ENCODE measurements at regions of chr1 and their contacts with region 1.

Region 1: DNA sequence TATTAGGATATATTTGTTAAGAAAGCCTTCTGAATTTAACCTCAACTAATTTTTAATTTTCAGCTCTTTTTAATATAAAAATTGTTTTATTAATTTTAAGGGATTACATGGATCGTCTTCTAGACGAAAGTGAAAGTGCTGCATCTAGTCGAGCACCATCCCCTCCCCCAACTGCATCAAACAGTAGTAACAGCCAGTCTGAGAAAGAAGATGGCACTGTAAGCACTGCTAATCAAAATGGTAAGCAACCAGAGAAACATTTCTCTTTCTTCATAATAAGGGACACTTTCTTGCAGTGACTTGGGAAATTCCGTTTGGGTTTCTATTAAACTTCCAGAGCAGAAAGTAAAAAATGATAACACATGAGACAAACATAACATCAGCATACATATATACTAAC is 56.9 kb downstream of the MIER1 start:
- DNase-seq: peak in 1 of 2 donors; percentile 48
- ATAC-seq: peak in 5 of 8 donors; percentile 70 to 85 (median 77)
- H3K4me3 ChIP-seq: peak overlapping the region in 6 of 10 donors; percentile 38 to 48 (median 46)
- H3K27ac ChIP-seq: peak overlapping the region in 5 of 10 donors; percentile 40 to 80 (median 49)
- H3K4me1 ChIP-seq: peaks cover 0 to 24% (median 11%) of the 10 kb centered on the region in 9 donors
- H3K27me3 ChIP-seq: no peaks in the 10 kb centered on the region
- CTCF ChIP-seq: peak in 2 of 9 donors; percentile 5 to 14

Region 2: DNA sequence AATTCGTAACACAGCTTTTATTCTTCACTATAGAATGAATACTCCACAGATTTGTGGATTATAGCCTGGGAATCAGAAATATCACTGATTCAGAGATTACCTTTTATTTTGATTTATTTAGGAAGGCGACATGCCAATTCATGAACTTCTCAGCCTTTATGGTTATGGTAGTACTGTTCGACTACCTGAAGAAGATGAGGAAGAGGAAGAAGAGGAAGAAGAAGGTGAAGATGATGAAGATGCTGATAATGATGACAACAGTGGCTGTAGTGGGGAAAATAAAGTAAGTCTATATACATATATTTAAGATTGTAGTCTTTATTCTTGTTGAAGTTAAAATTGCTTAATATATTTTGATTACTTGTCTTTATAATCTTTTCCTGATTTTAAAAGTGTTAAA is 23.7 kb before region 1 on chr1:
- intact Hi-C with region 1: loop called in 1 of 10 experiments (anchors 2 kb)
- DNase-seq: no peak
- ATAC-seq: no peak
- H3K4me3 ChIP-seq: no peak overlapping the region
- H3K27ac ChIP-seq: no peak overlapping the region
- H3K4me1 ChIP-seq: peaks cover 0 to 10% (median 3%) of the 10 kb centered on the region in 9 donors
- H3K27me3 ChIP-seq: no peaks in the 10 kb centered on the region
- CTCF ChIP-seq: no peak